Endothelial cell of umbilical vein (primary cell): ENCODE measurements at regions of chr22 and their contacts with region 1.

Region 1: DNA sequence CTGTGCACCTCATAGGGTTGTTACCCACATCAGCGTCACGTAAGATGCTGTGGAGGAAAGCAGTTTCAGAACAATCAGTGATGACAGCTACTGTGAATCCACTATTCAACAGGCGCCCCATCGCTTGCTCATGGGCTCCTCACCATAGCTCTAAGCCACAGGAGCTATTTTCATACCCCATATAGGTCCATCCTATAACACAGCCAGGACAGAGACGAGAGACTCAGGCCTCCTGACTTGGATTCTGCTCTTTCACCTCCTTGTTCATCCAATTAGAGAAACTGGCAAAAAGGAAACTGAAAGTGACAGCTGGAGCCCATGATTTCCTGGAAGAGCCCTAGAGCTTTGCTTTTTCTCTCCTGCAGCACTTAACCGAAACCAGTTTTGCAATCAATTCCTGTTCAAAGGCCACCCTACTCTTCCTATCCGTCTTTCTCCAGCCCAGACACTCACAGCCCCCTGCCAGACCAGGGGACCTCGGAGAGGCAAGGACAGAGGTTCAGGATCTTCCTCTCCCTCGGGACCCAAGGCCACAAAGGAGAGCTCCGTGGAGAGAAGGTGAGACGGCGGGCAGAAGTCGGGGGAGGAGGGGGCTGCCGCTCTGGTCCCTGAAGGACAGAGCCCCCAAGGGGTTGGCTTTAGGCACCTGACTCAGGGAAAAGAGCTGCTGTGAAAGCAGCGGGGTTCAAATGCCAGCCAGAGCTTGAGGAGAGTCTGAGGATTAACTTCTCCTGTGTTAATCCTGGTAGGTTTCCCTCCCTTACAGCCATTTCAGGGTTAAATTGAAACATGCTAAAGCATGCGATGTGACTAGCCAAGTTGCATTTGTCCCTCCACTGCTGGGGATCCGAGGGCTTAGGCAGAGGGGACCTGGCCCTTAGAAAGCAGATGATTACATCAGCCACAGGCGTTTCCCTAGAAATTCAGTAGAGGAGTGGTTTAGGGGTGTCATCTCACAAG is at the start of gene APOL6:
- DNase-seq: peak; percentile 50
- H3K4me3 ChIP-seq: peak within 1 kb of the TSS; percentile 41 to 59 (median 50)
- H3K27ac ChIP-seq: peak within 1 kb of the TSS; percentile 5
- H3K4me1 ChIP-seq: peaks cover 8% of the 10 kb centered on the region
- H3K27me3 ChIP-seq: no peaks in the 10 kb centered on the region
- CTCF ChIP-seq: no peak
- POLR2A ChIP-seq: no peak
- total RNA-seq, gene APOL6: 1.3 and 3.0 TPM in 2 replicates

Region 2: GRCh38 chr22:35739076-35739930 is 91.0 kb after region 1 on chr22:
- CTCF ChIA-PET with region 1: no interaction called
- POLR2A ChIA-PET with region 1: no interaction called
- dilution Hi-C with region 1: no loop called
- intact Hi-C with region 1: loop called (anchors 10 kb)
- DNase-seq: no peak
- H3K4me3 ChIP-seq: no peak overlapping the region
- H3K27ac ChIP-seq: no peak overlapping the region
- H3K4me1 ChIP-seq: peaks cover 19% of the 10 kb centered on the region
- H3K27me3 ChIP-seq: no peaks in the 10 kb centered on the region
- CTCF ChIP-seq: no peak
- POLR2A ChIP-seq: no peak